ENCODE measurements at regions of chr18 and their contacts with region 1.

Region 1: DNA sequence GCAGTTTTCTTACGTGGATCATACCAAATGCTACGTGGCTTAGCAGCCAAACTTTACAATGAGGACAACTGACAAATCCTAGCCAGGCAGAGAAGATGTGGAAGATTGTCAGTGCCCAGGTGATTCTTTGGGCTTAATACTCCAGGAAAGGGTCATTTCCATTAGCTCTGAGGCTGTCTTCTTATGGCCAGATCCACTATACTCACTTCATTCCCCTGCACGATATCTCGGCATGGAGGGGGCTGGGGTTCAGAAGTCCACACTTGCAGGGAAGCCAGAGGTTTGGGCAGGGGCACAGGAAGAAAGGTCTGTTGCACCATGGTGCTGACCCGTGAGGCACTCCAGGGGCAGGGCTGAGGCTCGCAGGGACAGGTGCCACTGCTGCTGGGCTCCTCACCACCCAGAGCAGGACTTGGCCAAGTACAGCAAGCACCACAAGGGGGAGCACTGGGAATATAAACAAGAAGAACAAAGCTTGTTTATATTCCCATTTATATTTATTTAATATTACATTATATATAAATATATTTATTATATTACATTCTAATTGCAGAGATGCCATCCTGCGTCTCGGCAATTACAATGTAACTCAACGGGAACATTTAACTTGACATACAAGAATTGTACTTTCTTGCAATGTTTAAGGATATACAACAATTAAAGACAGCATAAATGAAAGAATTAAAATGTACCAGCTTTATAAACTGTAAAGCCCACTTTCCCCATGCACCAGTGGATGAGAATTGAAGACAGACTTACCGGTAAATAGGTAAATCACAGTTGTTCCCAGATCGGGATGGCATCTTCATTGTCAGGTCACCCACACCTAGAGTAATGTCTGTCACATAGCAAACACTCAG is 27.2 kb downstream of the CLUL1 start:
- DNase-seq: peak; percentile 69 to 87 (median 75)
- H3K4me3 ChIP-seq: no peak overlapping the region
- H3K27ac ChIP-seq: no peak overlapping the region
- H3K4me1 ChIP-seq: no peaks in the 10 kb centered on the region
- H3K27me3 ChIP-seq: no peaks in the 10 kb centered on the region
- CTCF ChIP-seq: peak; percentile 31 to 79 (median 58)
- POLR2A ChIP-seq: no peak

Region 2: GRCh38 chr18:725646-726045 is 101.7 kb after region 1 on chr18:
- intact Hi-C with region 1: loop called in 1 of 2 experiments (anchors 10 kb)
- DNase-seq: no peak
- H3K4me3 ChIP-seq: no peak overlapping the region
- H3K27ac ChIP-seq: no peak overlapping the region
- H3K4me1 ChIP-seq: no peaks in the 10 kb centered on the region
- H3K27me3 ChIP-seq: no peaks in the 10 kb centered on the region
- CTCF ChIP-seq: no peak
- POLR2A ChIP-seq: no peak

Region 3: DNA sequence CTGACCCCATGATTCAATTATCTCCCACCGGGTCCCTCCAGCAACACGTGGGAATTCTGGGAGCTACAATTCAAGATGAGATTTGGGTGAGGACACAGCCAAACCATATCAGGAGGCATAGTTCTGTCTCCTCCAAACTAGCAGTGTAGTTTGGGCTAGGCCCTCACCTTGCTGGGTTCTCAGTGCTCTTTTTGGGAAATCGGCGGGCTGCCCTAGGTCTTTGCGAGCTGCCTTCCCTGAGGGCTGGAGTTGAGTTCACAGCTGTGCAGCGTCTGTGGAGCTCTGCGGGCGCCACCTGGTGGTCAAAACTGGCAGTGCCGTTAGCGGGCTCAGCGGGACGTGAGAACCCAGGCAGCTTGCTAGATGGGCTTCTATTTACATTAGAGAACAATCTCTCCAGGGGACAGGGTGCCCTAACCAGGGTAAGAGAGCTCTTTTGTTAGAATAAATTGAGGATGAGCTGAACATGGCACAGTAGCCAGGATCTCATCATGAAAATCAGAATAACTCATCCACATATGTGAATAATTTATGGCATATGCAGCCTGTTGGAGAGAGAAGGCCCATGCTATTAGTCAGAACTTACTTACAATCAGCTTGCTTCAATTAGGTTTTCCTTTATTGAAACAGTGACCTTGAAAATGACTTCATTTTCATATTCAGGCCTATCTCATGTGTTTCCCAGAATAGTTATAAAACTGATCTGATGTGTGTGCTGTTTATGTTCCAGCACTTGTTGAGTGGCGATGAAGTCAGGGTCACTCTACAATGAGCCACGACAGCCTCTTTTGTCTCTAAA is 215.4 kb after region 1 on chr18:
- intact Hi-C with region 1: loop called in 1 of 2 experiments (anchors 10 kb)
- DNase-seq: peak; percentile 83 to 96 (median 91)
- H3K4me3 ChIP-seq: no peak overlapping the region
- H3K27ac ChIP-seq: peak overlapping the region; percentile 22 to 77 (median 63)
- H3K4me1 ChIP-seq: peaks cover 7 to 24% of the 10 kb centered on the region in 2 donors
- H3K27me3 ChIP-seq: no peaks in the 10 kb centered on the region
- CTCF ChIP-seq: peak; percentile 90 to 99 (median 96)
- POLR2A ChIP-seq: no peak

Region 4: GRCh38 chr18:877238-877637 is 253.2 kb after region 1 on chr18:
- intact Hi-C with region 1: no loop called
- DNase-seq: no peak
- H3K4me3 ChIP-seq: no peak overlapping the region
- H3K27ac ChIP-seq: no peak overlapping the region
- H3K4me1 ChIP-seq: no peaks in the 10 kb centered on the region
- H3K27me3 ChIP-seq: peaks cover 3% of the 10 kb centered on the region
- CTCF ChIP-seq: no peak
- POLR2A ChIP-seq: no peak